HepG2 (cell line): ENCODE measurements at regions of chr20 and their contacts with region 1.

Region 1: GRCh38 chr20:60210779-60211617 is 252.8 kb downstream of the CDH26 start:
- DNase-seq: peak; percentile 44
- ATAC-seq: peak; percentile 95
- H3K4me3 ChIP-seq: no peak overlapping the region
- H3K27ac ChIP-seq: no peak overlapping the region
- H3K4me1 ChIP-seq: no peaks in the 10 kb centered on the region
- H3K27me3 ChIP-seq: peaks cover 0 to 16% of the 10 kb centered on the region in 2 experiments; a peak in 1 of 5 replicates
- CTCF ChIP-seq: peak; percentile 94
- EP300 ChIP-seq: no peak
- POLR2A ChIP-seq: no peak
- RAD21 ChIP-seq: peak; percentile 75

Region 2: GRCh38 chr20:60262967-60263603 is 52.1 kb after region 1 on chr20:
- CTCF ChIA-PET with region 1: interaction called, 9 read pairs
- POLR2A ChIA-PET with region 1: no interaction called
- in situ Hi-C with region 1: no loop called
- intact Hi-C with region 1: loop called (anchors 1 kb)
- DNase-seq: peak; percentile 29
- ATAC-seq: peak; percentile 57
- H3K4me3 ChIP-seq: no peak overlapping the region
- H3K27ac ChIP-seq: no peak overlapping the region
- H3K4me1 ChIP-seq: peaks cover 14% of the 10 kb centered on the region
- H3K27me3 ChIP-seq: peaks cover 0 to 5% of the 10 kb centered on the region in 2 experiments; a peak in 2 of 5 replicates
- CTCF ChIP-seq: peak; percentile 74
- EP300 ChIP-seq: no peak
- POLR2A ChIP-seq: no peak
- RAD21 ChIP-seq: no peak

Region 3: GRCh38 chr20:61120595-61121515 is 909.9 kb after region 1 on chr20:
- CTCF ChIA-PET with region 1: interaction called, 12 read pairs
- POLR2A ChIA-PET with region 1: no interaction called
- in situ Hi-C with region 1: loop called (anchors 5 kb)
- intact Hi-C with region 1: no loop called
- DNase-seq: peak; percentile 67
- ATAC-seq: peak; percentile 80
- H3K4me3 ChIP-seq: no peak overlapping the region
- H3K27ac ChIP-seq: no peak overlapping the region
- H3K4me1 ChIP-seq: peaks cover 7% of the 10 kb centered on the region; the same call in 1 of the 2 replicates
- H3K27me3 ChIP-seq: peaks cover 1 to 36% of the 10 kb centered on the region in 2 experiments; a peak in 3 of 5 replicates
- CTCF ChIP-seq: peak; percentile 78
- EP300 ChIP-seq: no peak
- POLR2A ChIP-seq: no peak
- RAD21 ChIP-seq: peak; percentile 31; the same call in 1 of the 2 replicates

Region 4: GRCh38 chr20:61220160-61220559 is 1009.2 kb after region 1 on chr20:
- CTCF ChIA-PET with region 1: no interaction called
- POLR2A ChIA-PET with region 1: no interaction called
- in situ Hi-C with region 1: loop called (anchors 5 kb)
- intact Hi-C with region 1: no loop called
- DNase-seq: no peak
- ATAC-seq: no peak
- H3K4me3 ChIP-seq: no peak overlapping the region
- H3K27ac ChIP-seq: no peak overlapping the region
- H3K4me1 ChIP-seq: no peaks in the 10 kb centered on the region
- H3K27me3 ChIP-seq: peaks cover 0 to 21% of the 10 kb centered on the region in 2 experiments; a peak in 2 of 5 replicates
- CTCF ChIP-seq: no peak
- EP300 ChIP-seq: no peak
- POLR2A ChIP-seq: no peak
- RAD21 ChIP-seq: no peak

Region 5: GRCh38 chr20:61263084-61263695 is 1052.2 kb after region 1 on chr20:
- CTCF ChIA-PET with region 1: interaction called, 7 read pairs
- POLR2A ChIA-PET with region 1: no interaction called
- in situ Hi-C with region 1: loop called (anchors 10 kb)
- intact Hi-C with region 1: no loop called
- DNase-seq: no peak
- ATAC-seq: peak; percentile 26; the same call in 2 of the 3 replicates
- H3K4me3 ChIP-seq: no peak overlapping the region
- H3K27ac ChIP-seq: no peak overlapping the region
- H3K4me1 ChIP-seq: no peaks in the 10 kb centered on the region
- H3K27me3 ChIP-seq: peaks cover 12 to 51% of the 10 kb centered on the region in 2 experiments; a peak in 4 of 5 replicates
- CTCF ChIP-seq: peak; percentile 64
- EP300 ChIP-seq: no peak
- POLR2A ChIP-seq: no peak
- RAD21 ChIP-seq: no peak

Region 6: GRCh38 chr20:61886721-61887594 is 1676.0 kb after region 1 on chr20:
- CTCF ChIA-PET with region 1: interaction called, 5 read pairs
- POLR2A ChIA-PET with region 1: no interaction called
- in situ Hi-C with region 1: loop called (anchors 10 kb)
- intact Hi-C with region 1: no loop called
- DNase-seq: peak; percentile 53
- ATAC-seq: peak; percentile 76
- H3K4me3 ChIP-seq: no peak overlapping the region
- H3K27ac ChIP-seq: no peak overlapping the region
- H3K4me1 ChIP-seq: no peaks in the 10 kb centered on the region
- H3K27me3 ChIP-seq: peaks cover 20 to 50% of the 10 kb centered on the region in 2 experiments
- CTCF ChIP-seq: peak; percentile 97
- EP300 ChIP-seq: no peak
- POLR2A ChIP-seq: no peak
- RAD21 ChIP-seq: peak; percentile 79